ENCODE measurements at regions of chr13 and their contacts with region 1.

Region 1: DNA sequence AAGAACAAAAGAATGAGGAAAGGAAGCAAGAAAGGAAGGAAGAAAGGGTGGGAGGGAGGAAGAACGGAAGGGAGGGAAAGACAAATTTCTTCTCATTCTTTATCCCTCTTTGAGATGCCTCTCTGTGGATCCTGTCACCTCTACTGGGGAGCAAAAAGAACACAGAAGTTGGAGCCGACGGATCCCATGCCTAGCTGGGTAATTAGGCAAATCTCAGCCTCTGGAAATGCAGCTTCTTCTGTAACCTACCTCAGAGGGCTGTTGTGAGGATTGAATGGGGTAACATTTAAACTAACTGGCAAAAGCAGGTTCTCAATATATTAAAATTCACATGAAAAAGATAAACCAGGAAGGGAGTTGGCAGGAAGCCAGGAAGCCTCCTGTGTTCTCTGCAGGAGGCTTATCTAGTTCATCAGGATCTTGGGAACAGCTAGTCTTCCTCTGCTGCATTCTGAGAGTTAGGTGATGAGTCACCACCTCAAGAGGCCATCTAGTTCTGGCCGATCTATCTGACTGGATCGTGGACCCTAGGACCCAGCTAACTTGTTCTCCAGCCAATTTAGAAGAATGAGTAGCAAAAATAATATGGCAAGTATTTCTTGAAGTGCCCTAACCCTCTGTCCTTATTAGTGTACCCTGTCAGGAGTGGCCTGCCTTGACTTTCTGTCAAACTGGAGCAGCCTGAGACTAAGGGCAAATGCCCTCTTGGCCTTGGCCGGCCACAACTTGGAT is 15.2 kb upstream of the CPB2 start:
- DNase-seq: no peak

Region 2: DNA sequence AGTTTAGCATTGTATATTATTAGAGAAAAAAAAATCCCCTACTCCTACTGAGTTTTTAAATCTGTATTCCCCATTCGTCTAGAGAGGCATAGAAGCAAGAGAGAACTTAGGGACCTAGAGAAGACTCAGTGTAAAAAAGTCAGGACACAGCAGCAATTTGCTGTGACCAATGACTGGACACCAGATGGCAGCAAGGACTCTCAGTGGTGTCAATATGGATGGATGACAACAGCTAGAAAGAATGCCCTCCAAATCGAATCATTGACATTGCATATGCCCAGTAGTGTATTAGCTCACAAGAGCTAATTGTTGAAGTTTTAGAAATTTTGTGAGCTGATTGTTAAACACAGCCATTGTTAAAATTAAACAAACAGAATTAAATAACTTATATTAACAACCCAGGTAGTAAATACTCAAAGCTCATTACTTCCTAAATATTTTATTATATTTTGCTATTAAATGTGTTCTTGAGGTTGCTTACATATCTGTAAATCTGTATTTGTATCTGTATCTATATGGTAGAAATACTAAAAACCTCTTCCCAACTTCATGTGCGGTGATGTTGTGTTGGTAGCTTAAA is 312.4 kb before region 1 on chr13:
- intact Hi-C with region 1: loop called (anchors 5 kb)
- DNase-seq: no peak